Activated naive CD4-positive, alpha-beta T cell treated with anti-CD3 and anti-CD28 coated beads, Interleukin-2, amount 10 ng/mL, durations not matched to agents 7 days and 5 days (primary cell): ENCODE measurements at regions of chr12 and their contacts with region 1.

Region 1: GRCh38 chr12:12008931-12009611 is 61.7 kb upstream of the BCL2L14 start:
- DNase-seq: peak; percentile 68
- H3K4me3 Mint-ChIP-seq: peak overlapping the region; percentile 68
- H3K27ac Mint-ChIP-seq: peak overlapping the region; percentile 98
- H3K4me1 Mint-ChIP-seq: peaks cover 86% of the 10 kb centered on the region
- H3K27me3 Mint-ChIP-seq: no peaks in the 10 kb centered on the region

Region 2: GRCh38 chr12:11967376-11968047 is 41.6 kb before region 1 on chr12:
- CTCF ChIA-PET with region 1: no interaction called
- DNase-seq: no peak
- H3K4me3 Mint-ChIP-seq: no peak overlapping the region
- H3K27ac Mint-ChIP-seq: no peak overlapping the region
- H3K4me1 Mint-ChIP-seq: peaks cover 14% of the 10 kb centered on the region
- H3K27me3 Mint-ChIP-seq: peaks cover 12% of the 10 kb centered on the region

Region 3: GRCh38 chr12:11981121-11981733 is 27.8 kb before region 1 on chr12:
- CTCF ChIA-PET with region 1: interaction called, 12 read pairs
- DNase-seq: peak; percentile 68
- H3K4me3 Mint-ChIP-seq: peak overlapping the region; percentile 3
- H3K27ac Mint-ChIP-seq: peak overlapping the region; percentile 98
- H3K4me1 Mint-ChIP-seq: peaks cover 75% of the 10 kb centered on the region
- H3K27me3 Mint-ChIP-seq: no peaks in the 10 kb centered on the region

Region 4: GRCh38 chr12:11998944-11999315 is 10.1 kb before region 1 on chr12:
- CTCF ChIA-PET with region 1: interaction called, 16 read pairs
- DNase-seq: no peak
- H3K4me3 Mint-ChIP-seq: no peak overlapping the region
- H3K27ac Mint-ChIP-seq: peak overlapping the region; percentile 92
- H3K4me1 Mint-ChIP-seq: peaks cover 48% of the 10 kb centered on the region
- H3K27me3 Mint-ChIP-seq: peaks cover 5% of the 10 kb centered on the region

Region 5: GRCh38 chr12:12024911-12025682 is 16.0 kb after region 1 on chr12:
- CTCF ChIA-PET with region 1: interaction called, 13 read pairs
- DNase-seq: peak; percentile 66
- H3K4me3 Mint-ChIP-seq: peak overlapping the region; percentile 3
- H3K27ac Mint-ChIP-seq: peak overlapping the region; percentile 84
- H3K4me1 Mint-ChIP-seq: peaks cover 46% of the 10 kb centered on the region
- H3K27me3 Mint-ChIP-seq: peaks cover 9% of the 10 kb centered on the region